ENCODE measurements at regions of chr18 and their contacts with region 1.

Region 1: DNA sequence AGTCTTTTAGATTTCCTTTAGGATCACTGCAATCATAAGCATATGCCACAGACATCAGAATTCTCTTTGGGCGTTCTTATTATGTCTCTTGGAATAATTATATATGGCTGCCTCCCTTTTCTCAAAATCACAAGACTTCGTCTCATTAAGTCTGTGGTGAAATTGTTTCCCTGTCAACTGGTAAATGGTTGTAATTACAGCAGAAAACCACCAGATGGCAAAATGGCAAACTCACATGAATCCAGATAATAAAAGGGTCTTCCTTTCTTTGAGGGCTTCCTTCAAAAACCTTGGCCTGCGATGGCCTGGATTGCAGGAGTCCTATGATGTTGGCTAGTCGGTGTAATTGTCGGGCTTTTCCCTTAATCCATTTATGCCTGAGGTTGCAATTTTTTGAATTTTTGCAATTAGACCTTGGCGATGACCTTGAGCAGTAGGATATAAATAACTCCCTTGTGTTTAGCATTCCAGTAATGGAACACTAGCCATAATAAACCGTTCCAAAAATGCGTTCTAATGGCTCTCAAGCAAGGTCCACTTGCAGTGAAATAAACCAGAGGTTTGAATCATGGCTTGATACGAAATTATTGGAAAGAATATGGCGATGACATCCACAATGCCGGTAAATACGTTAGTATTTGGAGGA is 656.4 kb downstream of the MBD2 start:
- DNase-seq: peak in 2 of 4 donors; percentile 12 to 21
- ATAC-seq: peak; percentile 52
- H3K4me3 ChIP-seq: no peak overlapping the region
- H3K27ac ChIP-seq: no peak overlapping the region
- H3K4me1 ChIP-seq: no peaks in the 10 kb centered on the region
- H3K27me3 ChIP-seq: no peaks in the 10 kb centered on the region
- CTCF ChIP-seq: peak; percentile 52 to 68

Region 2: GRCh38 chr18:54119524-54120019 is 551.5 kb after region 1 on chr18:
- intact Hi-C with region 1: loop called in 1 of 2 experiments (anchors 10 kb)
- DNase-seq: peak in 2 of 4 donors; percentile 46 to 58
- ATAC-seq: peak; percentile 92
- H3K4me3 ChIP-seq: no peak overlapping the region
- H3K27ac ChIP-seq: no peak overlapping the region
- H3K4me1 ChIP-seq: no peaks in the 10 kb centered on the region
- H3K27me3 ChIP-seq: no peaks in the 10 kb centered on the region
- CTCF ChIP-seq: peak; percentile 74 to 77

Measured in left lung (tissue), 14 donors.